ENCODE measurements at regions of chr4 and their contacts with region 1.

Region 1: GRCh38 chr4:170420254-170420693 is 330.5 kb upstream of the AADAT start:
- DNase-seq: no peak
- ATAC-seq: no peak
- H3K4me3 ChIP-seq: no peak overlapping the region
- H3K27ac ChIP-seq: no peak overlapping the region
- H3K4me1 ChIP-seq: no peaks in the 10 kb centered on the region
- H3K27me3 ChIP-seq: no peaks in the 10 kb centered on the region
- CTCF ChIP-seq: no peak
- POLR2A ChIP-seq: no peak

Region 2: GRCh38 chr4:169523796-169524195 is 896.5 kb before region 1 on chr4:
- intact Hi-C with region 1: loop called in 1 of 10 experiments (anchors 10 kb)
- DNase-seq: no peak
- ATAC-seq: no peak
- H3K4me3 ChIP-seq: no peak overlapping the region
- H3K27ac ChIP-seq: no peak overlapping the region
- H3K4me1 ChIP-seq: no peaks in the 10 kb centered on the region
- H3K27me3 ChIP-seq: no peaks in the 10 kb centered on the region
- CTCF ChIP-seq: no peak
- POLR2A ChIP-seq: no peak

Region 3: DNA sequence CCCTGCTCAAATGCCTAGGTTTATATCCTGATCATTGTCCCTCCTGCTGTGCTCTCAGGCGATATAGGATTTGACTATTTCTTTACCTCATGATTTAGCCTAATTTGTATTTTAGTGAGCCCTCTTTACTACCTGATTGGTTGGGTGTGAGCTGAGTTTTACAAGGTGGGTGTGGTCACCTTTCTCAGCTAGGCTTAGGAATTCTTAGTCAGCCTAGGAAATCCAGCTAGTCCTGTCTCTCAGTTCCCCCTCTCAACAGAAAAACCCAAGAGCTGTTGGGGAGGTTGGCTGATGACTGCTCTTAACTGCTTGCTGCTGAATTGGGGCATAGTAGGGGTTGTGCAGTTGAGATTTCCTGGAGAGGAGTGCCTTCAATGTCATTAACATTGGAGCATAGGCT is 230.0 kb before region 1 on chr4:
- intact Hi-C with region 1: no loop called
- DNase-seq: no peak
- ATAC-seq: no peak
- H3K4me3 ChIP-seq: no peak overlapping the region
- H3K27ac ChIP-seq: no peak overlapping the region
- H3K4me1 ChIP-seq: no peaks in the 10 kb centered on the region
- H3K27me3 ChIP-seq: no peaks in the 10 kb centered on the region
- CTCF ChIP-seq: no peak
- POLR2A ChIP-seq: no peak

Region 4: GRCh38 chr4:170214101-170214500 is 206.2 kb before region 1 on chr4:
- intact Hi-C with region 1: no loop called
- DNase-seq: no peak
- ATAC-seq: no peak
- H3K4me3 ChIP-seq: no peak overlapping the region
- H3K27ac ChIP-seq: no peak overlapping the region
- H3K4me1 ChIP-seq: no peaks in the 10 kb centered on the region
- H3K27me3 ChIP-seq: no peaks in the 10 kb centered on the region
- CTCF ChIP-seq: no peak
- POLR2A ChIP-seq: no peak

Measured in heart left ventricle (tissue), 16 donors.